OCI-LY7 (cell line): ENCODE measurements at regions of chr3 and their contacts with region 1.

Region 1: GRCh38 chr3:20185701-20186598 is at the start of gene SGO1:
- DNase-seq: peak; percentile 99
- H3K4me3 ChIP-seq: peak within 1 kb of the TSS; percentile 87
- H3K27ac ChIP-seq: peak within 1 kb of the TSS; percentile 93
- H3K4me1 ChIP-seq: peaks cover 21% of the 10 kb centered on the region
- CTCF ChIP-seq: no peak
- total RNA-seq, gene SGO1: 21.4 and 27.6 TPM in 2 replicates

Region 2: GRCh38 chr3:19146685-19147650 is 1039.0 kb before region 1 on chr3:
- CTCF ChIA-PET with region 1: no interaction called
- POLR2A ChIA-PET with region 1: interaction called, 3 read pairs
- intact Hi-C with region 1: loop called (anchors 10 kb)
- DNase-seq: peak; percentile 91
- H3K4me3 ChIP-seq: peak overlapping the region; percentile 72
- H3K27ac ChIP-seq: peak overlapping the region; percentile 68
- H3K4me1 ChIP-seq: peaks cover 11% of the 10 kb centered on the region
- CTCF ChIP-seq: peak; percentile 76

Region 3: DNA sequence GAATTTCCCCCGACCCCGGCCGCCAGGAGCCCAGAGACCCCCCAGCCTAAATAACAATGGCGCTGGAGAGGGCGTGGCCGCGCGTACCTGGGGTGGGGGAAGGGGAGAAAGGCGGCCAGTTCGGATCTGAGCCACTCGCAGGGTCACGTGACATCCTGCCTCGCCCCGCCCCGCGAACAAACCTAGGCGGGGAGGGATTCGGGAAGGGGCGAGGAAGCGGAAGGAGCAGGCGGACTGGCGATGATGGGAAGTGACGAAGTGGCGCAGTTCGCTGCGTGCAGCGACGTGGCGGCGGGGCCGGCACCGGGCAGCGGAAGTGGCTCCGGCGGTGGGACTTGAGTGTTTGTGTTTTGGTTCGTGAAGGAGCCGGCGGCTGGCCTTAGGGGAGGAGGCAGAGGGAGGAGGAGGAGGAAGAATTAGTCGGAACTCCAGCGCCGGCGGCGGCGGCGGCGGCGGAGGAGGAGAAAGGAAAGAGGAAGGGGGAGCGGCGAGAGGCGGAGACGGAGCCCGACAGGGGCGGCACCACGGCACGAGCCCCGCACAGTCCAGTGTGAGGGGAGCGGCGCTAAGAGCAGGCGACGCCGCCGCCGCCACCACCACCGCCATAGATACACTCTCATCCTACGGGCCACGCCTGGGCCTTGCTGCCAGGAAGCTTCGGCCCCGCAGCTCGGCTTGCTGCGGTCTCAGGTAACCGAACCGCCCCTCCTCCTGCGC is 239.0 kb before region 1 on chr3 and contains the start of gene RAB5A:
- CTCF ChIA-PET with region 1: no interaction called
- POLR2A ChIA-PET with region 1: interaction called, 11 read pairs
- intact Hi-C with region 1: loop called (anchors 1 kb)
- DNase-seq: peak; percentile 97
- H3K4me3 ChIP-seq: peak within 1 kb of the TSS; percentile 91
- H3K27ac ChIP-seq: peak within 1 kb of the TSS; percentile 73
- H3K4me1 ChIP-seq: peaks cover 30% of the 10 kb centered on the region
- CTCF ChIP-seq: no peak
- total RNA-seq, gene RAB5A: 24.5 and 26.1 TPM in 2 replicates

Region 4: GRCh38 chr3:20160230-20160629 is 25.7 kb before region 1 on chr3:
- CTCF ChIA-PET with region 1: interaction called, 3 read pairs
- POLR2A ChIA-PET with region 1: interaction called, 24 read pairs
- intact Hi-C with region 1: no loop called
- DNase-seq: no peak
- H3K4me3 ChIP-seq: no peak overlapping the region
- H3K27ac ChIP-seq: peak overlapping the region; percentile 7
- H3K4me1 ChIP-seq: peaks cover 14% of the 10 kb centered on the region
- CTCF ChIP-seq: no peak

Region 5: DNA sequence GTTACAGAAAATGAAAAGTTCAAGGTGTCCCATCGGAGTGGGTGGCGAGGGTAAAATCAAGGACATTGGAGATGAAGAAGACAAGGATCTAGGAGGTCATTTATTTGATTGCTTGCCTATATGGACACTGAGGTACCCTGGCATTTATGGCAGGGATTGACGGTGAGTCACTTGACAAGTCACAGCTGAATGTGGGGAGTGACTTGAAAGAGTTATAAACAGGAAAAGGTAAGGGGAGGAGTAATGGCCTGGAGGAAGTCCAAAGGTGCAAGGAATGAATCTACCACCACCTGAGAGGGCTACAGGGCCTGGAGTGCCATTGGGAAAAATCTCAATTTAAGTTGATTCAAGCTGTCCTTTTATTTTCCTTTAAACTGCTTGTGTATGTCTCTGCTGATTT is 11.8 kb after region 1 on chr3:
- CTCF ChIA-PET with region 1: no interaction called
- POLR2A ChIA-PET with region 1: interaction called, 13 read pairs
- intact Hi-C with region 1: no loop called
- DNase-seq: no peak
- H3K4me3 ChIP-seq: no peak overlapping the region
- H3K27ac ChIP-seq: no peak overlapping the region
- H3K4me1 ChIP-seq: no peaks in the 10 kb centered on the region
- CTCF ChIP-seq: no peak

Region 6: DNA sequence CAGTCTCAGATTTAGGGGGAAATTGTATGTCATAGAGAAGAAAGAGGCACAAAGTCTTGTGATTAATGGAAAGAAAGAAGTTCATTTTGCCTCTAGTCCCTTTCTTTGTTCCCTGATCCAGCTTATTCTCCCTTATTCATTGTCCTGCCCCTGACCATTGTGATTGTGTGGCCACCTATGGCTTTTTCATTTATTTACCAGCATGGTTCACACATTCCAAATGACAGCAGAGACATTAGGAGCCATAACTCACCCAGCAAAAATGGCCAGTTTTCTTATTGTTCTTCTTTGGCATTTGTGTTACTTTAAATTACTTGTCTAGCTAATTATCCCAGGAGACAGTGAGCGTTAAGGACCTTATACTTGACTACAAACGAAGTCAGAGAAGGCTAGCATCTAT is 36.3 kb after region 1 on chr3:
- CTCF ChIA-PET with region 1: no interaction called
- POLR2A ChIA-PET with region 1: no interaction called
- intact Hi-C with region 1: no loop called
- DNase-seq: no peak
- H3K4me3 ChIP-seq: no peak overlapping the region
- H3K27ac ChIP-seq: no peak overlapping the region
- H3K4me1 ChIP-seq: no peaks in the 10 kb centered on the region
- CTCF ChIP-seq: no peak

Region 7: GRCh38 chr3:20324714-20325478 is 138.9 kb after region 1 on chr3:
- CTCF ChIA-PET with region 1: no interaction called
- POLR2A ChIA-PET with region 1: no interaction called
- intact Hi-C with region 1: no loop called
- DNase-seq: peak; percentile 9
- H3K4me3 ChIP-seq: no peak overlapping the region
- H3K27ac ChIP-seq: no peak overlapping the region
- H3K4me1 ChIP-seq: no peaks in the 10 kb centered on the region
- CTCF ChIP-seq: no peak